ENCODE measurements at regions of chr22 and their contacts with region 1.

Region 1: DNA sequence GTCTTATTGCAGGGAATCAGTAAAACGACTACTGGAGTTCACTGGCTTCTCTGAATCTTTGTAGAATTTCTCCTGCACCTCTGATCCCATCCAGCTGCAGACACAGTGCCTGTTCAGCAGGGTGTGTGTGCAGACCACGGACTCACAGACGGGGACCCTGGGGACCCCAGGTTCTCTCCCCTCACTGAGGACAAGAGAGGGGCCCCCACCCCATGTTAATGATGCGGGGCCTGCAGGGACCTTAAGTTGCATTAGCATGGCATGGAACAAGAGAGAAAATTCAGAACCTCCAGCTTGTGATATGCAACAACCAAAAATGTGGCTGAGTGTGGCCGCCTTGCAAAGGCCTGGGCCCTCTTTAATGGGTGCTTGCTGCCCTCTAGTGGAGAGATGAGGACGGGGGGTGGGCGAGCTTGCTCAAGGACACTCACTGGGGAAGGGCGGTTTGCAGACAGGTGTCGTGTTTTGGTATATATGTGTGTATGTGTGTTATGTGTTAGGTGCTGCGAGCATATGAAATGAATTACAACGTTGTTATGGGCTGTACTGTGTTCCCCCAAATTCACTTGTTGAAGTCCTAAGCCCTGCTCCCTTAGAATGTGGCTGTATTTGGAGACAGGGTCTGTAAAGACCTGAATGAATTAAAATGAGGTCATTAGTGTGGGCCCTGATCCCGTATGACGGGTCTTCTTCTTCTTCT is 84.4 kb upstream of the SEPTIN5 start:
- DNase-seq: peak; percentile 79
- H3K4me3 ChIP-seq: no peak overlapping the region
- H3K27ac ChIP-seq: no peak overlapping the region
- H3K4me1 ChIP-seq: no peaks in the 10 kb centered on the region
- H3K27me3 ChIP-seq: no peaks in the 10 kb centered on the region
- CTCF ChIP-seq: peak; percentile 88

Region 2: DNA sequence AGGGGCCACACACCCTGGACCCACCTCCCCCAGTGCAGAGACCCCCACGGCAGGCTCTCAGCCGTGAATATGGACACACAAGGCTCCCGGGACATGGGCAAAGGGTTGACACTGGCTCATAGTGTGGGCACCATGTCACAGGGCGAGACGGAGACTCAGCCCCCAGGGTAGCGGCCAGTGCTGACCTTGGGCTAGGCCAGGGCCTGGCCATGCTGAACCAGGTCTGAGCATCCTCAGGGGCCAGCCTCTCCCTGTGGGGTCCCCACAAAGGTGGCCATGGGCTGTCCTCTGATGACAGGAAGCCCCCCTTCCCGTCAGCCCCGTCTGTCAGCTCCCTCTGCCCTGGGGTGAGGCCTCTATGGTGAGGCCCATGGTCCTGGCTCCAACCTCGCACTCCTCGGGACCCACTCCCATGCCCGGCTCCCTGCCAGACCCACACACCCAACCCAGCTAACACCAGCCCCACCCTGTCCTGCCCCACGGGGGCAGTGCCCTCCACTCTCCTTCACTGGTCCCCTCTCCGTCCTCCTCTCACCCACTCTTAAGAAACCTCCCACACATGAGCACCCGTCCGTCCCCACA is 674.8 kb before region 1 on chr22:
- intact Hi-C with region 1: loop called (anchors 5 kb)
- DNase-seq: no peak
- H3K4me3 ChIP-seq: no peak overlapping the region
- H3K27ac ChIP-seq: no peak overlapping the region
- H3K4me1 ChIP-seq: no peaks in the 10 kb centered on the region
- H3K27me3 ChIP-seq: no peaks in the 10 kb centered on the region
- CTCF ChIP-seq: no peak

Region 3: GRCh38 chr22:19149047-19149883 is 480.6 kb before region 1 on chr22:
- intact Hi-C with region 1: loop called (anchors 5 kb)
- DNase-seq: no peak
- H3K4me3 ChIP-seq: peak overlapping the region; percentile 7
- H3K27ac ChIP-seq: no peak overlapping the region
- H3K4me1 ChIP-seq: no peaks in the 10 kb centered on the region
- H3K27me3 ChIP-seq: peaks cover 36% of the 10 kb centered on the region
- CTCF ChIP-seq: no peak

Region 4: GRCh38 chr22:19304547-19304946 is 325.3 kb before region 1 on chr22:
- intact Hi-C with region 1: loop called (anchors 10 kb)
- DNase-seq: no peak
- H3K4me3 ChIP-seq: no peak overlapping the region
- H3K27ac ChIP-seq: no peak overlapping the region
- H3K4me1 ChIP-seq: no peaks in the 10 kb centered on the region
- H3K27me3 ChIP-seq: no peaks in the 10 kb centered on the region
- CTCF ChIP-seq: no peak

Region 5: DNA sequence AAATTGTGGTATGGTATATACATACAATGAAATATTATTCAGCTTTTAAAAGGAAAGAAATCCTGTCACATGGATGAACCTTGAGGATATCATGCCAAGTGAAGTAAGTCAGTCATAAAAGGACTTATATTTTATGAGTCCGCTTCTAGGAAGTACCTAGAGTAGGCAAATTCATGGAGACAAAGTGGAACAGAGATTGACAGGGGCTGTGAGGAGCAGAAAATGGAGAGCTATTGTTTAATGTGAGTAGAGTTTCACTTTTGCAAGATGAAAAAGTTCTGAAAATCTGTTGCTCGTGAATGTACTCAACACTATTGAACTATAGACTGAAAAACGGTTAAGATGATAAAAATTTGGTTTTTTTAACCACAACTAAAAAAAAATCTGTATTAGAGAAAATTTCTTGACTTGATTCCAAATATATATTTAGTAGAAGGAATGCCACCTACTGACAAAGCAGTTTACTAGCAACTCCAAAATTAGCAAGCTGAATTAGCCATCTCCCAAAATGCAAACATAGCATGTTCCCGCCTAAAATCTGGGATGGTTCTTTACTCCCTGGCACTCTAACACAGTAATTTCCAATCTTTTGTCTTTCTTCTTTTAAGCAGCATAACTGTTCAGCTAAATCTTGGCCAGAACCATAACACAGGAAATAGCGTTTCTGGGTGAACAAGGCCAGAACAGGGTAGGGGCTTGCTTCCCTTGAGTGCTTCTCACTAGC is 152.4 kb before region 1 on chr22:
- intact Hi-C with region 1: no loop called
- DNase-seq: no peak
- H3K4me3 ChIP-seq: peak overlapping the region; percentile 81
- H3K27ac ChIP-seq: no peak overlapping the region
- H3K4me1 ChIP-seq: peaks cover 11% of the 10 kb centered on the region
- H3K27me3 ChIP-seq: no peaks in the 10 kb centered on the region
- CTCF ChIP-seq: no peak

Region 6: GRCh38 chr22:19492504-19493174 is 137.2 kb before region 1 on chr22:
- intact Hi-C with region 1: loop called (anchors 5 kb)
- DNase-seq: no peak
- H3K4me3 ChIP-seq: no peak overlapping the region
- H3K27ac ChIP-seq: no peak overlapping the region
- H3K4me1 ChIP-seq: no peaks in the 10 kb centered on the region
- H3K27me3 ChIP-seq: no peaks in the 10 kb centered on the region
- CTCF ChIP-seq: no peak

Region 7: GRCh38 chr22:19591568-19591967 is 38.3 kb before region 1 on chr22:
- intact Hi-C with region 1: no loop called
- DNase-seq: no peak
- H3K4me3 ChIP-seq: no peak overlapping the region
- H3K27ac ChIP-seq: no peak overlapping the region
- H3K4me1 ChIP-seq: no peaks in the 10 kb centered on the region
- H3K27me3 ChIP-seq: no peaks in the 10 kb centered on the region
- CTCF ChIP-seq: no peak

Region 8: DNA sequence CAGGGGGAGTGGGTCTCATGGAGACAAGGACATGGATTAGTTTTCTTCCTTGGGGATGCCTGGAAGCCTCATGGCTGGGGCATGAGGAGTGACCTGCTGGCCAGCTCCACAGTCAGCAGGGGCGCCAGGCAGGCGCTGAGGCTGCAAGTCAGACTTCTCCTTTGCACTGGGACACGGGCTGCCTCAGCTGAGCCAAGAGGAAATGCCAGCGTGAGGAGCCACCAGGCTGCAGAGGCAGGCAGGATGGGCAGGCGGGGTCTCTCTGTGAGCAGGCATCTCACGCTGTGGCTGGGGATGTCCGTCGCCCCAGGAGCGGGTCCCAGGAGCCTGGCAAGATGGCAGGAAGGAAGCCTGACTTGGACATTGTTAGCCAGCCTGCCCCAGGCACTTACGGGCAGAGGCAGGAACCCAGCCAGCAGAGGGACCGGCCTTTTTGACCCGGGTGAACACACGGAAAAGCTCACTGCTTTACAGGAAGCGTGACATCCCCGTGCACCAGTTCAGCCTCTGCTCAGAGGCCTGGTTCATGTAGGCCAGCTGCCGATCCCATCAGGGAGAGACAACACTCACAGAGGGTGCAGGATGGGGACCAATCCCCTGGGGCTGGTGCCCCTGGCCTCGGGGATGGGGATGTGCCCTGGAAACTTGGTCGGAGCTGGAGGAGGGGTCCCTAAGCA is 214.6 kb after region 1 on chr22:
- intact Hi-C with region 1: no loop called
- DNase-seq: peak; percentile 22
- H3K4me3 ChIP-seq: no peak overlapping the region
- H3K27ac ChIP-seq: no peak overlapping the region
- H3K4me1 ChIP-seq: no peaks in the 10 kb centered on the region
- H3K27me3 ChIP-seq: no peaks in the 10 kb centered on the region
- CTCF ChIP-seq: no peak